HEK293T (cell line): ENCODE measurements at regions of chr1 and their contacts with region 1.

Region 1: DNA sequence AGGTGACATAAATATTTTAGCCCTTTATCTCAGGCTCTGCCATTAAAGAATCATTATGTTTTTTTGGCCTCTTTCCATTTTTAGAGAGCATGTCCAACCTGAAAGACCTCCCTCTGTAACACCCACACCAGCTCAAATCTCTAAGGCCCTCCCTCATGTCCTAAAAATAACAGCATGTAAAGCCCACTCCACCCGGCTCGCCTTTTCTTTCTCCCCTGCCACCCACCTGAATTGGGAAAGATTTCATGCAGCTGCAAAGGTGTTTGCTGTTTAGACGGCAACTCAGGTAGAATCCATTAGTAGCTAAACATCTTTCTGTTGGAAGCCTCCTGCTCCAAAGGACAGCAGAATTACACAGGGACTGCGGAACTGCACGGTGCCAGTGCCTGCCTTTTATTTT is 79.9 kb downstream of the DMRTA2 start:
- DNase-seq: no peak

Region 2: GRCh38 chr1:50332941-50333594 is 10.3 kb before region 1 on chr1:
- CTCF ChIA-PET with region 1: interaction called, 11 read pairs
- POLR2A ChIA-PET with region 1: no interaction called
- DNase-seq: peak; percentile 83